CD4-positive, alpha-beta memory T cell (primary cell): ENCODE measurements at regions of chr9 and their contacts with region 1.

Region 1: DNA sequence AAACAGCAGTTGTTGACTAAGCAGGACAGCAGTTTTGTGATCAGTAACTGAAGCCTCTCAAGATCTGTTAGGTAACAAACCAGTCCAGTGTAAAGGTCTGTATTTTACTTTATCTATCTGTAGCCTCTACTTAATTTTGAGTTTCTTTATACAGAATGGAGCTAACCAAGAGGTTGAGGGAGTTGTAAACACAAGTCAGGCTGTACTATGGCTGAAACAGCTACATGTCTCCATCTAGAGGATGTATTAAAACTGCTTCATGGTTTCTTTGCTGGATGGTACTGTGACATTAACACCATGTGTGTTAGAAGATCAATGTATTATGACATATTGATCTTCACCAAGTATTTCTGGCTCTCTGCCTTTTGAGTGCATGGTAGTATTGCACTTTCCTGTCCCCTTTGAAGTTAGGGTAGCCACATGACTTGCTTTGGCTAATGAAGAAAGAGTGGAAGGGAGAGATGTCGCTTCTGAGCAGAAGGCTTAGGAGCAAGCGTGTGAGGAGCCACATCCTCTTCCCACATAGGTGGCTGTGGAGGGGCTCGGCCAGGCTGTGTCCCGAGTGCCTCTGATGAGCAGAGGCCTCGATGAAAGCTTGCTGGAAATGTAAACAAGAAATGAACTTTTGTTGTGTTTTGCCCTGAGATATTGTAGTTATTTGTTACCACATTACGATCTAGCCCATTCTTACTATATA is 105.6 kb upstream of the PCA3 start:
- DNase-seq: peak in 4 of 5 donors; percentile 41 to 50 (median 46)
- H3K4me3 ChIP-seq: no peak overlapping the region
- H3K4me3 Mint-ChIP-seq: no peak overlapping the region
- H3K27ac ChIP-seq: no peak overlapping the region
- H3K27ac Mint-ChIP-seq: peak overlapping the region in 1 of 7 donors; percentile 45
- H3K4me1 ChIP-seq: peaks cover 7% of the 10 kb centered on the region
- H3K4me1 Mint-ChIP-seq: peaks cover 26 to 50% (median 40%) of the 10 kb centered on the region in 4 donors
- H3K27me3 ChIP-seq: no peaks in the 10 kb centered on the region
- H3K27me3 Mint-ChIP-seq: peaks cover 2% of the 10 kb centered on the region in 2 donors

Region 2: GRCh38 chr9:76240578-76240977 is 418.1 kb before region 1 on chr9:
- CTCF ChIA-PET with region 1: no interaction called
- POLR2A ChIA-PET with region 1: no interaction called
- intact Hi-C with region 1: no loop called
- DNase-seq: no peak
- H3K4me3 ChIP-seq: no peak overlapping the region
- H3K4me3 Mint-ChIP-seq: no peak overlapping the region
- H3K27ac ChIP-seq: no peak overlapping the region
- H3K27ac Mint-ChIP-seq: peak overlapping the region in 1 of 7 donors; percentile 38
- H3K4me1 ChIP-seq: no peaks in the 10 kb centered on the region
- H3K4me1 Mint-ChIP-seq: no peaks in the 10 kb centered on the region
- H3K27me3 ChIP-seq: no peaks in the 10 kb centered on the region
- H3K27me3 Mint-ChIP-seq: peaks cover 0 to 2% of the 10 kb centered on the region in 2 donors

Region 3: DNA sequence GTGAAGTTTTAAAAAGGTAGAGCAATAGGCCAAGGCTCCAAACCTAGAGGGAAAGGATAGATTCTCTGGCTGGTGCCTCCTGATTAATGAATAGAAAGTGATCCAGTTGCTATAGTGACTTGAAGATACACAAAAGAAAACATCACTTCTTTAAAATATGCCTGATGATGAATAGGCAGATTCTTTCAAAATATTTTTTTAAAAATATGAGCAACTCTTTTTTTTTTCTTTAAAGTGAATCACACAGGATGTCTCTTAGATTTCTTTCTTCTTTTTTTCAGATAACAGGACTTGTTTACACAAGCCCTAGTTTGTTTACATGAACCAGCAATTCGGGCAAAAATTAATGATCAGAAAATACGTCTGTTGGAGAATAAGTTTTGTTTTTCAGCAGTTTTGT is 388.9 kb before region 1 on chr9:
- CTCF ChIA-PET with region 1: no interaction called
- POLR2A ChIA-PET with region 1: no interaction called
- intact Hi-C with region 1: no loop called
- DNase-seq: no peak
- H3K4me3 ChIP-seq: no peak overlapping the region
- H3K4me3 Mint-ChIP-seq: no peak overlapping the region
- H3K27ac ChIP-seq: no peak overlapping the region
- H3K27ac Mint-ChIP-seq: no peak overlapping the region
- H3K4me1 ChIP-seq: no peaks in the 10 kb centered on the region
- H3K4me1 Mint-ChIP-seq: no peaks in the 10 kb centered on the region
- H3K27me3 ChIP-seq: no peaks in the 10 kb centered on the region
- H3K27me3 Mint-ChIP-seq: no peaks in the 10 kb centered on the region

Region 4: GRCh38 chr9:76403352-76403751 is 255.3 kb before region 1 on chr9:
- CTCF ChIA-PET with region 1: interaction called, 10 read pairs
- POLR2A ChIA-PET with region 1: no interaction called
- intact Hi-C with region 1: loop called (anchors 1 kb)
- DNase-seq: peak; percentile 43 to 67 (median 60)
- H3K4me3 ChIP-seq: no peak overlapping the region
- H3K4me3 Mint-ChIP-seq: peak overlapping the region; percentile 37 to 79 (median 76)
- H3K27ac ChIP-seq: peak overlapping the region; percentile 33
- H3K27ac Mint-ChIP-seq: peak overlapping the region; percentile 72 to 93 (median 89)
- H3K4me1 ChIP-seq: peaks cover 7% of the 10 kb centered on the region
- H3K4me1 Mint-ChIP-seq: peaks cover 10 to 18% (median 12%) of the 10 kb centered on the region in 4 donors
- H3K27me3 ChIP-seq: no peaks in the 10 kb centered on the region
- H3K27me3 Mint-ChIP-seq: no peaks in the 10 kb centered on the region

Region 5: GRCh38 chr9:76443892-76444581 is 214.6 kb before region 1 on chr9:
- CTCF ChIA-PET with region 1: interaction called, 89 read pairs
- POLR2A ChIA-PET with region 1: interaction called, 3 read pairs
- intact Hi-C with region 1: loop called (anchors 1 kb)
- DNase-seq: no peak
- H3K4me3 ChIP-seq: no peak overlapping the region
- H3K4me3 Mint-ChIP-seq: peak overlapping the region in 2 of 8 donors; percentile 21 to 36
- H3K27ac ChIP-seq: no peak overlapping the region
- H3K27ac Mint-ChIP-seq: peak overlapping the region in 2 of 7 donors; percentile 3 to 85
- H3K4me1 ChIP-seq: peaks cover 15% of the 10 kb centered on the region
- H3K4me1 Mint-ChIP-seq: peaks cover 0 to 14% (median 9%) of the 10 kb centered on the region in 4 donors
- H3K27me3 ChIP-seq: no peaks in the 10 kb centered on the region
- H3K27me3 Mint-ChIP-seq: no peaks in the 10 kb centered on the region

Region 6: GRCh38 chr9:76451234-76451633 is 207.4 kb before region 1 on chr9:
- CTCF ChIA-PET with region 1: interaction called, 89 read pairs
- POLR2A ChIA-PET with region 1: interaction called, 3 read pairs
- intact Hi-C with region 1: loop called (anchors 1 kb)
- DNase-seq: no peak
- H3K4me3 ChIP-seq: no peak overlapping the region
- H3K4me3 Mint-ChIP-seq: no peak overlapping the region
- H3K27ac ChIP-seq: no peak overlapping the region
- H3K27ac Mint-ChIP-seq: no peak overlapping the region
- H3K4me1 ChIP-seq: peaks cover 10% of the 10 kb centered on the region
- H3K4me1 Mint-ChIP-seq: peaks cover 4 to 12% (median 7%) of the 10 kb centered on the region in 4 donors
- H3K27me3 ChIP-seq: no peaks in the 10 kb centered on the region
- H3K27me3 Mint-ChIP-seq: no peaks in the 10 kb centered on the region

Region 7: DNA sequence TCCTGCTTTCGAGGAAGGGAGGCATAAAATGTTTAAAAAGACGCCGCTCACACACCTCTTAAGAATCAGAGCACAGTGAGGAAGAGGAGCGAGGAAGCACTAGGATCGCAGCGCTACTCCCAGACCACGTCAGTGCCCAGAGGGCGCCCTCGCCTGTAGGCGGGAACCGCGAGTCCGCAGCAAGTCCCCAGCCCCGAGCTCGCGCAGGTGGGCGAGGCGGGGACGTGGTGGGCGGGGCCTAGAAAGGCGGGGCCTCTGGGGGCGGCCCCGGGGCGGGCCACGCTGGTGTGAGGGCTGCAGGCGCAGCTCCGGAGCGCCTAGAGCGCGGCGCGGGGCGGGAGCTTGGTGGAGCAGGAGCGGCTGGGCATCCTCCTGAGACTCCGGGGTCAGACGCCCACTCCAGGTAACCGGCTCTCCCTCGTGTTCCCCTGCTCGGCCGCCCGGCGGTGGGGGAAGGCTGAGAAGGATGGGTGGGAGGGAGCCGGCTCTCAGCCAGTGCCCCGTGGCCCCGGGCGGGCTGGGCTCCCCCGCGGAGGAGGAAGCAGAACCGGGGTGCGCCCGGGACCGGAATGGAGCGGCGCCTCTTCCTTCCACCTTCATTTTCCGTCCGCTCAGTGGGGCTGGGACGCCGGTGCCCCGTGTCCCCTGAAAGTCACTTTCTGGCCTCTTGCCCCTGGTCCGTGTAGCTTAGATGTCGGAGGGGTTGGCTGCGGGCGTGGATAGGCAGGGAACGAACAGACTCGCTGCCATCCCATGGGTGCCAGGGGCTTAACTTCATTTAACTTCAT is 199.6 kb before region 1 on chr9 and contains the start of gene GCNT1:
- CTCF ChIA-PET with region 1: interaction called, 59 read pairs
- POLR2A ChIA-PET with region 1: interaction called, 4 read pairs
- intact Hi-C with region 1: no loop called
- DNase-seq: peak; percentile 83 to 90 (median 87)
- H3K4me3 ChIP-seq: peak within 1 kb of the TSS; percentile 73 to 92
- H3K4me3 Mint-ChIP-seq: peak within 1 kb of the TSS; percentile 85 to 97 (median 94)
- H3K27ac ChIP-seq: peak within 1 kb of the TSS; percentile 28
- H3K27ac Mint-ChIP-seq: peak within 1 kb of the TSS; percentile 58 to 89 (median 83)
- H3K4me1 ChIP-seq: peaks cover 26% of the 10 kb centered on the region
- H3K4me1 Mint-ChIP-seq: peaks cover 18 to 27% (median 22%) of the 10 kb centered on the region in 4 donors
- H3K27me3 ChIP-seq: no peaks in the 10 kb centered on the region
- H3K27me3 Mint-ChIP-seq: no peaks in the 10 kb centered on the region
- total RNA-seq, gene GCNT1: 3.4 to 5.8 TPM

Region 8: GRCh38 chr9:76704593-76705204 is 46.0 kb after region 1 on chr9:
- CTCF ChIA-PET with region 1: interaction called, 14 read pairs
- POLR2A ChIA-PET with region 1: no interaction called
- intact Hi-C with region 1: no loop called
- DNase-seq: peak in 4 of 5 donors; percentile 46 to 56 (median 50)
- H3K4me3 ChIP-seq: no peak overlapping the region
- H3K4me3 Mint-ChIP-seq: no peak overlapping the region
- H3K27ac ChIP-seq: no peak overlapping the region
- H3K27ac Mint-ChIP-seq: no peak overlapping the region
- H3K4me1 ChIP-seq: no peaks in the 10 kb centered on the region
- H3K4me1 Mint-ChIP-seq: peaks cover 0 to 6% (median 3%) of the 10 kb centered on the region in 4 donors
- H3K27me3 ChIP-seq: no peaks in the 10 kb centered on the region
- H3K27me3 Mint-ChIP-seq: peaks cover 10 to 29% of the 10 kb centered on the region in 2 donors

Region 9: GRCh38 chr9:77011973-77012821 is 353.5 kb after region 1 on chr9:
- CTCF ChIA-PET with region 1: no interaction called
- POLR2A ChIA-PET with region 1: no interaction called
- intact Hi-C with region 1: loop called (anchors 5 kb)
- DNase-seq: peak in 4 of 5 donors; percentile 30 to 44 (median 38)
- H3K4me3 ChIP-seq: no peak overlapping the region
- H3K4me3 Mint-ChIP-seq: peak overlapping the region in 5 of 8 donors; percentile 10 to 59 (median 36)
- H3K27ac ChIP-seq: no peak overlapping the region
- H3K27ac Mint-ChIP-seq: no peak overlapping the region
- H3K4me1 ChIP-seq: peaks cover 4% of the 10 kb centered on the region
- H3K4me1 Mint-ChIP-seq: peaks cover 2 to 21% (median 6%) of the 10 kb centered on the region in 4 donors
- H3K27me3 ChIP-seq: peaks cover 19% of the 10 kb centered on the region
- H3K27me3 Mint-ChIP-seq: peaks cover 53% of the 10 kb centered on the region in 2 donors